Naive thymus-derived CD8-positive, alpha-beta T cell (primary cell): ENCODE measurements at regions of chr22 and their contacts with region 1.

Region 1: DNA sequence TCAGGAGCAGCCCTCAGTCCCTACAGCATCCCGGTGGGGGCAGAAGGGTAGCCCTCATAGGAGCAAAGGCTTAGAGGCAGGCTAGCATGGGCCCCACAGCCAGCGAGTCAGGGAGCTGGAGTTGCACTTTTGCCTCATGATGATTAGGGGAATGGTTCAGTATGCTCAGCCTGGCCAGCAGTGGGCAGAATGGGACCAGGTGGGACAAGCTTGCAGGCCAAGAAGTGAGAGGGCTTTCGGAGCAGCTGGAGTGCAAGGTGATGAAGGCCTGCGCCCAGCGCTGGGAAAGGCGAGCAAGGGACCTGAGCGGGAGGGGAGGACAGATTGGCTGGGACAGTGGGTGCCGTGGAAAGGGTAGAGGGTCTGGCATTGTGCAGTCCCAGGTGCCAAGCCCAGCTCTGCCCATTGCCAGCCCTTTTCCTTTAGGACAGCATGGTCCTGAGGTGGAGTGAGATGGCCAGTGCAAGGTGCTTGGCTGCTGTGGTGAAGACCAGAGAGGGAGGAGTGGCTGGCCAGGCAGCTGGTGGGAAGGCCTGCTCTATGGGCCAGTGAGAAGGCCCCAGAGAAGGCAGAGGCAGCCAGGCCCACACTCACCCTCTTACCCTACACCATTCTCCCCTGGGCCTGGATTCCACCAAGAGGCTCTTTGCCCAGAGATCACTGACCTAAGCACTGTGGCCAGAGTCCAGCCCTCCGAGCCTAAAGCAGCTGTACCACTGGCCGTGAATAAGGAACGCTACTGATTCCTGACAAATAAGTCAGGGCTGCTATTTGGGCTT is 47.9 kb upstream of the SUSD2 start:
- DNase-seq: peak; percentile 37 to 84 (median 58)
- ATAC-seq: peak; percentile 43 to 45
- H3K4me3 Mint-ChIP-seq: peak overlapping the region in 9 of 10 donors; percentile 27 to 85 (median 74)
- H3K27ac Mint-ChIP-seq: peak overlapping the region; percentile 93 to 99 (median 98)
- H3K4me1 Mint-ChIP-seq: peaks cover 28 to 58% (median 53%) of the 10 kb centered on the region in 4 donors
- H3K27me3 Mint-ChIP-seq: no peaks in the 10 kb centered on the region

Region 2: DNA sequence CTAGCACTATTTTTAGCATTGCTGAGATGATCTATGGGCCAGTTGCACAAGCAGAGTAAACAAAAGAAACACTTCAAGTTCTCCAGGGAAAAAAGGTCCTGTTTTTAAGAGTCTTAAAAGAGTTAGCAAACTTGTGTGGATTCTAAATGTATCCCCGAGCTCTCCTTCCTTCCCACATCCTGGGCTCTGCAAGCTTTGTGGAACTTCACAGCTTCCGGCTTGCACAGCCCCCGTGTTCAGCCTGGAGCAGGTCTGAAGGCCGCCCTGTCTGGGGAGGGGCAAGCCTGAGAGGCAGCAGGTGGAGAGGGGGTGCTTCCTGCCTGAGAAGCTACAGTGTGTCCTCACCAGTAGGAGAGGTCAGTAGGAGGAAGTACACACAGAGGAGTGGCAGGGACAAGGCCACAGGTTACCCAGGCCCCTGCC is 12.8 kb after region 1 on chr22:
- POLR2A ChIA-PET with region 1: interaction called, 540 read pairs
- DNase-seq: peak in 8 of 10 donors; percentile 10 to 49 (median 36)
- ATAC-seq: peak; percentile 73 to 75
- H3K4me3 Mint-ChIP-seq: peak overlapping the region; percentile 46 to 83 (median 68)
- H3K27ac Mint-ChIP-seq: peak overlapping the region; percentile 84 to 97 (median 93)
- H3K4me1 Mint-ChIP-seq: peaks cover 52 to 98% (median 92%) of the 10 kb centered on the region in 4 donors
- H3K27me3 Mint-ChIP-seq: no peaks in the 10 kb centered on the region

Region 3: GRCh38 chr22:24175160-24175808 is 41.9 kb after region 1 on chr22:
- POLR2A ChIA-PET with region 1: interaction called, 35 read pairs
- DNase-seq: peak; percentile 31 to 81 (median 58)
- ATAC-seq: peak; percentile 66 to 73
- H3K4me3 Mint-ChIP-seq: no peak overlapping the region
- H3K27ac Mint-ChIP-seq: peak overlapping the region in 9 of 10 donors; percentile 31 to 88 (median 72)
- H3K4me1 Mint-ChIP-seq: peaks cover 0 to 21% (median 4%) of the 10 kb centered on the region in 4 donors
- H3K27me3 Mint-ChIP-seq: no peaks in the 10 kb centered on the region